PC-9 (cell line): ENCODE measurements at regions of chr10 and their contacts with region 1.

Region 1: DNA sequence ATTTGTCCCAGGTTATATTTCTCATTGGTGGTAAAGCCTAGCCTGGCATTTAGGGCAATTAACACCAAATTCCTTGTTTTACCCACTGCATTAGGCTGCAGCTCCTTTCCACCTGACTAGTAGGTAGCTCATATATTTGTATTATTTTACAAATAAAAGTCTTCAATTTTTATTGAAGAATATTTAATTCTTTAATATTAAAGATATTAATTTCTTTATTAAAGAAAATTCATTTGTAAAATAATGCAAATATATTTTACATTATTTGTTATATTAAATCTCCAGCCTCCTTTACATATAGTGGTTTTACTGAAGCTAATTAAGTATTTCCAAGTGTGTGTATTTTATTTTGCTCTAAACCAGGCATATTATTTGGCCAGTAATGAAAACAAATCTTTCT is 361.2 kb downstream of the GPR158 start:
- DNase-seq: no peak
- H3K4me3 ChIP-seq: no peak overlapping the region
- H3K27ac ChIP-seq: no peak overlapping the region
- H3K4me1 ChIP-seq: no peaks in the 10 kb centered on the region
- H3K27me3 ChIP-seq: no peaks in the 10 kb centered on the region
- CTCF ChIP-seq: no peak

Region 2: DNA sequence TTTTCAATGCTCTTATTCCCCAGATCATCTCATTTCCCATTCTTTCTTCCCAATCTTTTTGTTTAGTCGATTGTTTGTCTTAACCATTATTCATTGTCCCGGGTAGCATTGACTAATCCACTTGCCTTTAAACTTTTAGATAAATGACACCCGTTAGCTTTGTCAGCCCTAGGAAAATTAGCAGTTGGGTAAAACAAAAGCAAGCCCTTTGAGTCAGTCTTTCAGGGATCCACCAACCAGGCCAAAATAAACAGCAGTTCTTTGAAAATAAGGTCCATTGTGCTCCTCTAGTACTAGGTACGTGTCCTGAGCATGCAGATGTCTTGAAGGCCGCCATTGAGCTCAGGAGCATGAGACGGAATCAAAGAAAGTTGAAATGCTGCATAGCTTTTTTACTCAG is 28.3 kb after region 1 on chr10:
- CTCF ChIA-PET with region 1: interaction called, 10 read pairs
- POLR2A ChIA-PET with region 1: no interaction called
- intact Hi-C with region 1: no loop called
- DNase-seq: no peak
- H3K4me3 ChIP-seq: no peak overlapping the region
- H3K27ac ChIP-seq: no peak overlapping the region
- H3K4me1 ChIP-seq: no peaks in the 10 kb centered on the region
- H3K27me3 ChIP-seq: no peaks in the 10 kb centered on the region
- CTCF ChIP-seq: no peak